ENCODE measurements at regions of chr12 and their contacts with region 1.

Region 1: GRCh38 chr12:110371408-110372055 is 32.0 kb downstream of the ANAPC7 start:
- DNase-seq: no peak
- H3K4me3 ChIP-seq: no peak overlapping the region
- H3K27ac ChIP-seq: no peak overlapping the region; the same call in 1 of the 2 replicates
- H3K4me1 ChIP-seq: no peaks in the 10 kb centered on the region; a peak in 1 of 7 replicates
- H3K27me3 ChIP-seq: no peaks in the 10 kb centered on the region
- CTCF ChIP-seq: no peak
- EP300 ChIP-seq: no peak
- POLR2A ChIP-seq: peak in 1 of 2 experiments; percentile 7; a peak in 1 of 3 replicates
- RAD21 ChIP-seq: no peak

Region 2: DNA sequence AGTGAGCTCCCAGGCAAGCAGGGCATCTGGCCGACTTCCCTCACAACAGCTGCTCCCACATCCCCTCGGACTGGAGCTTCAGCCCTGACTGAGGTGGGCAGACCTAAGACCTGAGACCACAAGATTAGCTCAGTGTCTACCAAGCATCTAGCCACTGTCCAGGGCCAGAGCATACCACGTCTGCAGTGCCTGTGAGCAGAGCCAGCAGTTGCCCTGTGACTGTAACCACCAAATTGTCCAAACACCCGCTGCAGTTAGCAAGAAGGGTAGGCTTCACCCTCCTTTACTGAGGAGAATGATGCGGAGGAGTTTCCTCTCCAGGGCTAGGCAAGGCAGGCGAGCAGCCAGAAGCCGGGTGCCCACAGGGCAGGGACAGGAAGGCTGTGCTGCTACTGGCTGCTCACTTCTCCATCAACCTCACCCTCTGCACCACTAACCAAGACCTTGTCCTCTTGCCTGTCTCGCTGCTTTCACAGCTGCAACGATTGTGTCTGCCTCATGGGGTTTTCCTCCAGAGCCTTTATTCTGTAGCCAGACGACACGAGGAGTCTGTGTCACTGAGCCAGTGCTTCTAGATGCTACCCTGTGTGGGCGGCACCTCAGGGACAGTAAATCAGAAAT is 21.9 kb before region 1 on chr12:
- CTCF ChIA-PET with region 1: interaction called, 5 read pairs
- POLR2A ChIA-PET with region 1: interaction called, 48 read pairs
- DNase-seq: no peak
- H3K4me3 ChIP-seq: no peak overlapping the region
- H3K27ac ChIP-seq: no peak overlapping the region
- H3K4me1 ChIP-seq: no peaks in the 10 kb centered on the region; a peak in 2 of 7 replicates
- H3K27me3 ChIP-seq: no peaks in the 10 kb centered on the region
- CTCF ChIP-seq: no peak
- EP300 ChIP-seq: no peak
- POLR2A ChIP-seq: peak; percentile 38 to 53; a peak in 2 of 3 replicates
- RAD21 ChIP-seq: no peak

Region 3: GRCh38 chr12:110355073-110355472 is 16.5 kb before region 1 on chr12:
- CTCF ChIA-PET with region 1: interaction called, 10 read pairs
- POLR2A ChIA-PET with region 1: interaction called, 48 read pairs
- DNase-seq: no peak
- H3K4me3 ChIP-seq: no peak overlapping the region
- H3K27ac ChIP-seq: no peak overlapping the region
- H3K4me1 ChIP-seq: no peaks in the 10 kb centered on the region
- H3K27me3 ChIP-seq: no peaks in the 10 kb centered on the region
- CTCF ChIP-seq: peak; percentile 38 to 71 (median 63)
- EP300 ChIP-seq: no peak
- POLR2A ChIP-seq: no peak
- RAD21 ChIP-seq: peak; percentile 42 to 48

Region 4: GRCh38 chr12:110361216-110361615 is 10.3 kb before region 1 on chr12:
- CTCF ChIA-PET with region 1: interaction called, 10 read pairs
- POLR2A ChIA-PET with region 1: interaction called, 17 read pairs
- DNase-seq: no peak
- H3K4me3 ChIP-seq: no peak overlapping the region
- H3K27ac ChIP-seq: no peak overlapping the region
- H3K4me1 ChIP-seq: no peaks in the 10 kb centered on the region
- H3K27me3 ChIP-seq: no peaks in the 10 kb centered on the region
- CTCF ChIP-seq: no peak
- EP300 ChIP-seq: no peak
- POLR2A ChIP-seq: no peak
- RAD21 ChIP-seq: no peak

Region 5: GRCh38 chr12:110458756-110459155 is 87.2 kb after region 1 on chr12:
- CTCF ChIA-PET with region 1: no interaction called
- POLR2A ChIA-PET with region 1: no interaction called
- DNase-seq: no peak
- H3K4me3 ChIP-seq: no peak overlapping the region
- H3K27ac ChIP-seq: no peak overlapping the region
- H3K4me1 ChIP-seq: no peaks in the 10 kb centered on the region
- H3K27me3 ChIP-seq: no peaks in the 10 kb centered on the region
- CTCF ChIP-seq: no peak
- EP300 ChIP-seq: no peak
- POLR2A ChIP-seq: no peak
- RAD21 ChIP-seq: no peak